ENCODE measurements at regions of chr16 and their contacts with region 1.

Region 1: GRCh38 chr16:15949210-15950160 is at the start of gene ABCC1:
- DNase-seq: peak; percentile 41 to 76 (median 72)
- ATAC-seq: peak; percentile 60 to 71
- H3K4me3 ChIP-seq: peak within 1 kb of the TSS; percentile 99
- H3K27ac ChIP-seq: peak within 1 kb of the TSS; percentile 76
- H3K4me1 ChIP-seq: peaks cover 7% of the 10 kb centered on the region
- H3K27me3 ChIP-seq: no peaks in the 10 kb centered on the region
- total RNA-seq, gene ABCC1: 17.4 to 30.9 (median 26.0) TPM

Region 2: DNA sequence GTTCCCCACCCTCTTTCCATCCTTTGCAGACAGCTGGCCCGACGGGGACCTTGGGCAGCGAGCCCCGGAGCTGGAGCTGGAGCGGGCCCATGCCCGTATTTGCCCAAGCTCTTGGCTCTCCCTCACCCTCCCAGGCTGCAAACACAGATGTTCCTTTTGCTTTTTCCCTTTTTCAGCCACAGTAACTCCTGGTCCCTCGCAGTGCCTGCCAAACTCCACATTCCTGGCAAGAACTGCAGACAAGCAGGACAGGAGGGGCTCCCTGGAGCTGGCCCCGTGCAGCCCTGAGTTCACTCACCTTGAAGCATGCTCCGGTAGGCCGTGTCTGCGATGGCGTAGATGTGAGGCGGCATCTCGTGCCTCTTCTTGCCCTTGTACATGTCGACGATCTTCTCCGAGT is 126.5 kb before region 1 on chr16:
- intact Hi-C with region 1: no loop called
- DNase-seq: peak in 1 of 3 donors; percentile 47
- ATAC-seq: peak; percentile 24 to 50
- H3K4me3 ChIP-seq: no peak overlapping the region
- H3K27ac ChIP-seq: no peak overlapping the region
- H3K4me1 ChIP-seq: no peaks in the 10 kb centered on the region
- H3K27me3 ChIP-seq: no peaks in the 10 kb centered on the region

Region 3: DNA sequence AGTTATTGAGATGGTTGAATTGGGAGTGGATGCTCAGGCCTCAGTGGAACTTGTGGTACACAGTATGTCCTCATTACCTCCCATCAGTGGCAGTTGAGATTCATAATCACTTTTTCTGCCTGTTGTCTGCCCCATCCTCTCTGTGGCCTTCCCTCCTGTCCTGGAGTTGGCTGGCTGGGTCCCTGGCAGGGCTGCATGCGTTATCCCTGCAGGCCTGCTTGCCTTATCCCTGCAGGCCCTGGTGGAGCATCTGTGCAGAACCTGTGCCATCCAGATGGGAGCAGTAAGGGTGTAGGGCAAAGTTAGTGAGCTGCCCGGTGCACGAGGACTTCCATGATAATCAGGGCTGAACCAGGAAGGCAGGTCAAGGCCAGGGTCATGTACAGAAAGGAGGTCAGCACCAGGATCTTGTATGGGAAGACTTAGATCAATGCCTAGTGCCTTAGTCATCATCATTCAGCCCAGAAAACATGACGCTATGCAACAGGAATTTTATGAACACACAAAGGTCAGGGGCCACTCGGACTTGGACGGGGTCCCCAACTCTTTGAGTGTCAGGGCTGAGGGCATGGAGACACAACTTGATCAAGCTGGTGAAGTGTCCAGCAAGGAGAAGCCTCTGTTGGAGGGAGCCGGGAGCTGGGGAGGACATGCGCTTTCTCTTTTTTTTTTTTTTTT is 47.1 kb after region 1 on chr16:
- intact Hi-C with region 1: loop called in 1 of 4 experiments (anchors 10 kb)
- DNase-seq: peak; percentile 67 to 79 (median 78)
- ATAC-seq: peak; percentile 45 to 67
- H3K4me3 ChIP-seq: no peak overlapping the region
- H3K27ac ChIP-seq: peak overlapping the region; percentile 89
- H3K4me1 ChIP-seq: peaks cover 18% of the 10 kb centered on the region
- H3K27me3 ChIP-seq: no peaks in the 10 kb centered on the region

Region 4: GRCh38 chr16:16033208-16033717 is 83.8 kb after region 1 on chr16:
- intact Hi-C with region 1: loop called in 1 of 4 experiments (anchors 10 kb)
- DNase-seq: no peak
- ATAC-seq: peak in 1 of 2 donors; percentile 46
- H3K4me3 ChIP-seq: no peak overlapping the region
- H3K27ac ChIP-seq: peak overlapping the region; percentile 2
- H3K4me1 ChIP-seq: peaks cover 5% of the 10 kb centered on the region
- H3K27me3 ChIP-seq: no peaks in the 10 kb centered on the region

Measured in right cardiac atrium (tissue), 5 donors.